ENCODE measurements at regions of chr2 and their contacts with region 1.

Region 1: DNA sequence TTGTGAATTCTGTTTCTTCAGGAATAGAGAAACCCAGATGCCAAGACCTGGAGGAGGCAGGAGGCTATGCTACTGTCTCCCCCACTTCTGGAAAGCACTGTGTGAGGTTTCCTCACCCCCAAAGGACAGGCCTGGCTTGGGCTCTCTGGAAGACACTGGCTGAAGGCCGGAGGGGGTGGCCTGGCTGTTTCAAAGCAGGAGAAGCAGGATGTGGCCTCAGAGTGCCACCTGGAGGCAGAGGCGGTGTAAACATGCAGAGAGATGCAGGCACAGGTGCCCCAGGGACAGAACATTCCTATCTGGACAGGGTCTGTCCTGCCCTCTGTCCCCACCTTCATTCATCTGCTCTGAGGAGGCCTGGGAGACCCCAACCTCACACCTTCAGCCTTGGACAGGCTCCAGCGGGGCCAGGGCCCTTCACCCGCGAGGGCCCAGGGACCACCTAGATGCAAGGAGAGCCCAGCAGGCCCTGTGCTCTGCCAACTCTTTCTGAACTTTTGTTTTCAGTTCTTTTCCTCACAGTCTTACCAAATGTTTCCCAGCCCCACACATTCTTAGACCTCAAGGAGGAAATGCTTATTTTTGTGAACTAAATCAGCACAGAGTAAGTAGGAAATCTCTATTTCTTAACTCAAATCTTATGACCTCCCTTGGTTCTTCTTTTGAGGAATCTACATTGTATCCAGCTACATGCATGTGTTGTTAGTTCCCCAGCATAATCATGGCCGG is 79.2 kb downstream of the LONRF2 start:
- DNase-seq: peak; percentile 77
- ATAC-seq: peak; percentile 91
- H3K4me3 ChIP-seq: no peak overlapping the region
- H3K27ac ChIP-seq: no peak overlapping the region
- H3K4me1 ChIP-seq: 0 out of 2 replicates have a peak, but pooled peaks cover under 1% of the 10 kb centered on the region
- H3K27me3 ChIP-seq: no peaks in the 10 kb centered on the region
- CTCF ChIP-seq: peak; percentile 88

Region 2: DNA sequence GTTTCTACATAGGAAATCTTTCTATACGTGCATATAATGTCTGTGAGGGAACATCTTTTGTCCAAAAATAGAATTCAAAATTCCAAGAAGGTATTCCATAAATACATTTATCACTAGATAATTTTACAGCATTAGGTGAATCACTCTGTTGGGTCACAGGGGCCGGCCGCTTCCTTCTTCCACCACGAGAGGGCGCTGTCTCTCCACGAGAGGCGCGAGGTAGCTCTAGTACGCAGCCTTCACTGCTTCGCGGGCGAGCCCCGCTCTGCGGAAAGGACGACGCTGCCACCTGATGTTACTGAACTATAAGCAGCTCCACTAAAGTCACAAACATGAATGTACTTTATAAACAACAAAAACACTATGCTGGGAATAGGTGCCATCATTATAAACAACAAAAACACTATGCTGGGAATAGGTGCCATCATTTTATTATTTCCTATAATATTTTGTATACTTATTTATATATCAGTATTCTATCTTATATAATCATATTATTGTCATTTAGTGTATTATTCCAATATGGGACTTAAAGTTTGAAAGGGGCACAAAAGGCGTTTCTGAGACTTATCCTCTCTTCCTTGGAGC is 683.9 kb before region 1 on chr2:
- CTCF ChIA-PET with region 1: no interaction called
- POLR2A ChIA-PET with region 1: no interaction called
- intact Hi-C with region 1: loop called (anchors 5 kb)
- DNase-seq: peak; percentile 90
- ATAC-seq: peak; percentile 100
- H3K4me3 ChIP-seq: no peak overlapping the region
- H3K27ac ChIP-seq: no peak overlapping the region
- H3K4me1 ChIP-seq: no peaks in the 10 kb centered on the region
- H3K27me3 ChIP-seq: no peaks in the 10 kb centered on the region
- CTCF ChIP-seq: peak; percentile 97

Region 3: DNA sequence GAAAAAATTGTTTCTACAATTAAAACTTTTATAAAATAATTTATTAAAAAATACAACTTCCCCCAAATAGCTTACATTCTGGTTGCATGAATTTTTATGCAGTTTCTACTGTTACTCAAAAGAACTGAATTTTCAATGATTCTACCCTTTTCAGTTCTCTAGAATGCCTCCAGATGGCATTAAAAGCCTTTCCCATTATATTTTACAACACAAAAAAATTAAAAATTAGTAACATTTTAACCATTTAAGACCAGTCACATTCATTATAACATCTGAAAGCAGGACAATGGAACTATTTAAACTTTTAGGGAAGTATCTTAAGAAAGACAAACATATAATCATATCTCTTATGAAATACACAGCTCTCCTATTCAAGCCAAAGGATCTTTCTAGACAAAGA is 517.2 kb before region 1 on chr2:
- CTCF ChIA-PET with region 1: no interaction called
- POLR2A ChIA-PET with region 1: no interaction called
- intact Hi-C with region 1: loop called (anchors 1 kb)
- DNase-seq: peak; percentile 27
- ATAC-seq: no peak
- H3K4me3 ChIP-seq: no peak overlapping the region
- H3K27ac ChIP-seq: no peak overlapping the region
- H3K4me1 ChIP-seq: no peaks in the 10 kb centered on the region
- H3K27me3 ChIP-seq: no peaks in the 10 kb centered on the region
- CTCF ChIP-seq: peak; percentile 60

Region 4: DNA sequence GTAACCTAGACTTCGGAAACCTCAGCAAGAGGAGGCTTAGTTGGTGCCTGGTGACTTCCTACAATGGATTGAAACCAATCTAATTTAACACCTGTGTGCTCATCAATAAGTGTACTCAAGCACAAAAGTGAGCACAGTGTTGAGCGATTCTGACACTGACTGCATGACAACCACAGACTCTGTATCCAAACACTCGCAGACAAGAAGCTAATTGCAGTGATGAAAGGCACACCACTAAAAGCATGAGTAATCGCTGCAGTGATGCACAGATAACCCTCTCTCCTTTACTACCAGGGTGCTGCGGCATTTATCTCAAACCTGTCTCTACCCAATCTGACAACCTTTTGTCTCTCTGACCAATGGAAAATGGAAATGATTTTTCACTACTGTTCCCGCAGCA is 268.8 kb before region 1 on chr2:
- CTCF ChIA-PET with region 1: no interaction called
- POLR2A ChIA-PET with region 1: no interaction called
- intact Hi-C with region 1: loop called (anchors 10 kb)
- DNase-seq: peak; percentile 52
- ATAC-seq: peak; percentile 27
- H3K4me3 ChIP-seq: peak overlapping the region; percentile 34; the same call in 1 of the 2 replicates
- H3K27ac ChIP-seq: peak overlapping the region; percentile 89
- H3K4me1 ChIP-seq: peaks cover 55% of the 10 kb centered on the region
- H3K27me3 ChIP-seq: no peaks in the 10 kb centered on the region
- CTCF ChIP-seq: no peak

Region 5: GRCh38 chr2:100008956-100009355 is 234.1 kb before region 1 on chr2:
- CTCF ChIA-PET with region 1: no interaction called
- POLR2A ChIA-PET with region 1: no interaction called
- intact Hi-C with region 1: loop called (anchors 10 kb)
- DNase-seq: no peak
- ATAC-seq: no peak
- H3K4me3 ChIP-seq: no peak overlapping the region
- H3K27ac ChIP-seq: no peak overlapping the region
- H3K4me1 ChIP-seq: peaks cover 19% of the 10 kb centered on the region
- H3K27me3 ChIP-seq: no peaks in the 10 kb centered on the region
- CTCF ChIP-seq: no peak

Region 6: GRCh38 chr2:100178051-100178788 is 64.8 kb before region 1 on chr2:
- CTCF ChIA-PET with region 1: no interaction called
- POLR2A ChIA-PET with region 1: no interaction called
- intact Hi-C with region 1: loop called (anchors 5 kb)
- DNase-seq: peak; percentile 90
- ATAC-seq: peak; percentile 89
- H3K4me3 ChIP-seq: no peak overlapping the region
- H3K27ac ChIP-seq: no peak overlapping the region
- H3K4me1 ChIP-seq: no peaks in the 10 kb centered on the region
- H3K27me3 ChIP-seq: no peaks in the 10 kb centered on the region
- CTCF ChIP-seq: peak; percentile 73

Measured in PC-3 (cell line).